ENCODE measurements at regions of chr12 and their contacts with region 1.

Region 1: GRCh38 chr12:121351820-121352681 is at the start of gene ANAPC5:
- DNase-seq: peak; percentile 90 to 99 (median 94)

Region 2: GRCh38 chr12:121296618-121297434 is 55.2 kb before region 1 on chr12 and contains the start of gene CAMKK2:
- intact Hi-C with region 1: loop called (anchors 2 kb)
- DNase-seq: peak; percentile 67 to 97 (median 79)

Region 3: GRCh38 chr12:121399391-121400331 is 47.6 kb after region 1 on chr12 and contains the start of gene RNF34:
- intact Hi-C with region 1: loop called (anchors 5 kb)
- DNase-seq: peak; percentile 95 to 100 (median 98)

Measured in posterior cingulate gyrus (tissue), 11 donors.